Mammary epithelial cell (primary cell): ENCODE measurements at regions of chr9 and their contacts with region 1.

Region 1: GRCh38 chr9:122940603-122941559 is at the start of gene RABGAP1:
- DNase-seq: peak; percentile 97
- H3K4me3 ChIP-seq: peak within 1 kb of the TSS; percentile 75 to 93 (median 77)
- H3K27ac ChIP-seq: peak within 1 kb of the TSS; percentile 54
- H3K4me1 ChIP-seq: peaks cover 24% of the 10 kb centered on the region
- H3K27me3 ChIP-seq: no peaks in the 10 kb centered on the region
- CTCF ChIP-seq: no peak
- total RNA-seq, gene RABGAP1: 56.0 to 61.7 TPM

Region 2: DNA sequence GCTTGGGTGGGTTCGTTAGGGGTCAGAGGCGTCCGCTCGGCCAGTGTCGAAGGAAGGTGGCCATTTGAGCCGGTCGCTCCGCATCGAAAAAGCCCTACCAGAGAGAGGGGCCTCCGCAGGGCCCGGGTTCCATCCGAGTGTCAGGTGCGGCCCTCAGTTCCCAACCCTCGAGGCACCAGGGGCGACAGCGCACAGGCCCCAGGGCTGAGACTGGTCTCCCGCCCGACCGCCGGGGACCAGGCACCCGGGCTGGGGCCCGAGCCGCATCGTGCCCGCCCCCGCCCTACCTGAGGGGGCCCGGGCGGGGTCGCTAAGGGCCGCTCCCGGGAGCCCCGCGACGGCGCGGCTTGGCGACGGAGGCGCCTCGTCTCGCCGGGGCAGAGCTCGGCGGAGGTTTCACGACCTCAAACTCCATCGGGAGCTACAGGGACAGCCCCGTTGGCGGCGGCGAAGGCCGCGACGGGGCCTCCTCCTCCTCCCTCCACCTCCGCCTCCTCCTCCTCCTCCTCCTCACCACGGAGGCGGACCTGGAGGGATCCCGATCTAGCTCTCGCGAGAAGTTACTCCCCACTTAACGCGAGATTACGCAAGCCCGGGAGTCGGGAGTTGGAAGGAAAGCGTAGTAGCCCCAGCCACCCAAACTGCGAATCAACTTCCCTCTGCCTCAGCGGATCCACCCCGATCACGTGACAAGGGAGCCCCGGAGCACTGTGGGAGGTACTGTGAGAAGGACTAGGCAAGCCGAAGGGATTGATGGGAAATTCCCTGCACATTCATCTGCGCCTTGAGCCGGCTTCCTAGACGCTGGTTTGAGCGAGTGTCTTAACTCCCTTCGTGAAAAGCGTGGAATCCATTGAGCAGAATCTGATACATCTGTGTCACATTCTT is 35.8 kb before region 1 on chr9 and contains the start of gene RC3H2:
- CTCF ChIA-PET with region 1: no interaction called
- dilution Hi-C with region 1: no loop called
- in situ Hi-C with region 1: no loop called
- intact Hi-C with region 1: loop called (anchors 1 kb)
- DNase-seq: peak; percentile 100
- H3K4me3 ChIP-seq: peak within 1 kb of the TSS; percentile 64 to 88 (median 80)
- H3K27ac ChIP-seq: peak within 1 kb of the TSS; percentile 84
- H3K4me1 ChIP-seq: peaks cover 2% of the 10 kb centered on the region
- H3K27me3 ChIP-seq: no peaks in the 10 kb centered on the region
- CTCF ChIP-seq: no peak
- total RNA-seq, gene RC3H2: 55.6 to 68.7 TPM

Region 3: GRCh38 chr9:122912964-122913673 is 27.8 kb before region 1 on chr9 and contains the start of gene ZBTB6:
- CTCF ChIA-PET with region 1: no interaction called
- dilution Hi-C with region 1: no loop called
- in situ Hi-C with region 1: no loop called
- intact Hi-C with region 1: loop called (anchors 2 kb)
- DNase-seq: peak; percentile 87
- H3K4me3 ChIP-seq: peak within 1 kb of the TSS; percentile 67 to 84 (median 81)
- H3K27ac ChIP-seq: peak within 1 kb of the TSS; percentile 76
- H3K4me1 ChIP-seq: peaks cover 9% of the 10 kb centered on the region
- H3K27me3 ChIP-seq: no peaks in the 10 kb centered on the region
- CTCF ChIP-seq: no peak
- total RNA-seq, gene ZBTB6: 8.2 to 18.3 TPM